ENCODE measurements at regions of chr6 and their contacts with region 1.

Region 1: GRCh38 chr6:116287689-116288282 is 8.1 kb upstream of the TSPYL1 start:
- DNase-seq: peak; percentile 33
- H3K27ac ChIP-seq: no peak overlapping the region
- CTCF ChIP-seq: peak; percentile 86

Region 2: GRCh38 chr6:116531675-116532570 is 244.1 kb after region 1 on chr6:
- CTCF ChIA-PET with region 1: interaction called, 14 read pairs
- POLR2A ChIA-PET with region 1: no interaction called
- DNase-seq: peak; percentile 57
- H3K27ac ChIP-seq: no peak overlapping the region
- CTCF ChIP-seq: peak; percentile 64